CD8-positive, alpha-beta T cell (primary cell): ENCODE measurements at regions of chr11 and their contacts with region 1.

Region 1: GRCh38 chr11:69670158-69670845 is 4.9 kb downstream of the LTO1 start:
- DNase-seq: peak; percentile 27 to 74 (median 61)
- ATAC-seq: peak; percentile 21
- H3K4me3 ChIP-seq: no peak overlapping the region
- H3K4me3 Mint-ChIP-seq: no peak overlapping the region
- H3K27ac ChIP-seq: no peak overlapping the region
- H3K27ac Mint-ChIP-seq: peak overlapping the region; percentile 62
- H3K4me1 ChIP-seq: peaks cover 23% of the 10 kb centered on the region
- H3K4me1 Mint-ChIP-seq: peaks cover 31% of the 10 kb centered on the region
- H3K27me3 ChIP-seq: no peaks in the 10 kb centered on the region
- H3K27me3 Mint-ChIP-seq: no peaks in the 10 kb centered on the region
- CTCF ChIP-seq: peak; percentile 74

Region 2: GRCh38 chr11:69048718-69049489 is 621.4 kb before region 1 on chr11 and contains the start of gene TPCN2:
- CTCF ChIA-PET with region 1: no interaction called
- POLR2A ChIA-PET with region 1: interaction called, 3 read pairs
- intact Hi-C with region 1: loop called in 1 of 2 experiments (anchors 2 kb)
- DNase-seq: peak; percentile 79 to 98 (median 89)
- ATAC-seq: peak; percentile 98
- H3K4me3 ChIP-seq: peak within 1 kb of the TSS; percentile 61 to 70
- H3K4me3 Mint-ChIP-seq: peak within 1 kb of the TSS; percentile 79
- H3K27ac ChIP-seq: peak within 1 kb of the TSS; percentile 74 to 91
- H3K27ac Mint-ChIP-seq: peak within 1 kb of the TSS; percentile 92
- H3K4me1 ChIP-seq: peaks cover 9% of the 10 kb centered on the region
- H3K4me1 Mint-ChIP-seq: peaks cover 28% of the 10 kb centered on the region
- H3K27me3 ChIP-seq: no peaks in the 10 kb centered on the region
- H3K27me3 Mint-ChIP-seq: no peaks in the 10 kb centered on the region
- CTCF ChIP-seq: no peak
- total RNA-seq, gene TPCN2: 13.1 to 15.0 TPM

Region 3: GRCh38 chr11:69101115-69101791 is 569.0 kb before region 1 on chr11:
- CTCF ChIA-PET with region 1: interaction called, 13 read pairs
- POLR2A ChIA-PET with region 1: no interaction called
- intact Hi-C with region 1: loop called (anchors 1 kb)
- DNase-seq: peak; percentile 57 to 85 (median 70)
- ATAC-seq: peak; percentile 99
- H3K4me3 ChIP-seq: no peak overlapping the region
- H3K4me3 Mint-ChIP-seq: no peak overlapping the region
- H3K27ac ChIP-seq: no peak overlapping the region
- H3K27ac Mint-ChIP-seq: no peak overlapping the region
- H3K4me1 ChIP-seq: no peaks in the 10 kb centered on the region
- H3K4me1 Mint-ChIP-seq: peaks cover 4% of the 10 kb centered on the region
- H3K27me3 ChIP-seq: peaks cover 0 to 6% of the 10 kb centered on the region in 2 experiments
- H3K27me3 Mint-ChIP-seq: peaks cover 3% of the 10 kb centered on the region
- CTCF ChIP-seq: peak; percentile 95

Region 4: DNA sequence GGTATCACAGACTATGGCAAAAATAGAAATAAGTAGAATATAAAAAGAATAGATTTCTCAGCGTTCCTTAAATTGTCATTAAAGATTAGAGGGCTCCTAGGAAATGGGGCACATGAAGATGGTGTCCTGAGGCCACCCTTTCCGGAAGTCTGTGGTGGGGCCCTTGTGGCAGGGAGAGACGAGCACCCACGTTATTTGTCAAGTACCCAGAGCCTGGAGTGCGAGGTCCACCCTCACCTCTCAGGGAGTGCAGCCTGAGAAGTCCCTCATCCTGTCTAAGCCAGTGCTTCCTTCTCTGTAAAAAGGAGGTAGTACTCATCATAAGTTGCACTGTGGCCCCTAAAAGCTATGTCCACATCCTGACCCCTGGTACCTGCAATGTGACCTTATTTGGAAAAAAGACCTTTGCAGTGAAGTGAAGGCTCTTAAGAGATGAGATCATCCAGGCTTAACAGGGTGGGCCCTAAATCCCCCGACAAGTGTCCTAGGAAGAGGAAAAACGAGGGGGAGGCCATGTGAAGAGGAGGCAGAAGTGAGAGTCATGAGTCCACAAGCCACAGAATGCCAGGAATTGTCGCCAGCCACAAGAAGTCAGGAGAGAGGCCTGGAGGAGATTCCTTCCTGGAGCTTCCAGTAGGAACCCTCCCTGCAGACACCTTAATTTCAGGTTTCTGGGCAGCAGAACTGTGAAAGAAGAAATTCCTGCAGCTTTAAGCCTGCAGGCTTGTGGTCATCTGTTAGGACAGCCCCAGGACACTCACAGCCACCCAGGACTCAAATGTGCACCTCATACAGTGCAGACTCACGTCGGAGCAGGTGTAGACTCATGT is 106.1 kb before region 1 on chr11:
- CTCF ChIA-PET with region 1: no interaction called
- POLR2A ChIA-PET with region 1: no interaction called
- intact Hi-C with region 1: no loop called
- DNase-seq: no peak
- ATAC-seq: no peak
- H3K4me3 ChIP-seq: no peak overlapping the region
- H3K4me3 Mint-ChIP-seq: no peak overlapping the region
- H3K27ac ChIP-seq: no peak overlapping the region
- H3K27ac Mint-ChIP-seq: no peak overlapping the region
- H3K4me1 ChIP-seq: peaks cover 4% of the 10 kb centered on the region
- H3K4me1 Mint-ChIP-seq: peaks cover 5% of the 10 kb centered on the region
- H3K27me3 ChIP-seq: no peaks in the 10 kb centered on the region
- H3K27me3 Mint-ChIP-seq: peaks cover 18% of the 10 kb centered on the region
- CTCF ChIP-seq: no peak

Region 5: GRCh38 chr11:69654569-69655327 is 15.6 kb before region 1 on chr11:
- CTCF ChIA-PET with region 1: interaction called, 28 read pairs
- POLR2A ChIA-PET with region 1: no interaction called
- intact Hi-C with region 1: no loop called
- DNase-seq: no peak
- ATAC-seq: no peak
- H3K4me3 ChIP-seq: no peak overlapping the region
- H3K4me3 Mint-ChIP-seq: no peak overlapping the region
- H3K27ac ChIP-seq: no peak overlapping the region
- H3K27ac Mint-ChIP-seq: no peak overlapping the region
- H3K4me1 ChIP-seq: no peaks in the 10 kb centered on the region
- H3K4me1 Mint-ChIP-seq: no peaks in the 10 kb centered on the region
- H3K27me3 ChIP-seq: no peaks in the 10 kb centered on the region
- H3K27me3 Mint-ChIP-seq: no peaks in the 10 kb centered on the region
- CTCF ChIP-seq: no peak

Region 6: DNA sequence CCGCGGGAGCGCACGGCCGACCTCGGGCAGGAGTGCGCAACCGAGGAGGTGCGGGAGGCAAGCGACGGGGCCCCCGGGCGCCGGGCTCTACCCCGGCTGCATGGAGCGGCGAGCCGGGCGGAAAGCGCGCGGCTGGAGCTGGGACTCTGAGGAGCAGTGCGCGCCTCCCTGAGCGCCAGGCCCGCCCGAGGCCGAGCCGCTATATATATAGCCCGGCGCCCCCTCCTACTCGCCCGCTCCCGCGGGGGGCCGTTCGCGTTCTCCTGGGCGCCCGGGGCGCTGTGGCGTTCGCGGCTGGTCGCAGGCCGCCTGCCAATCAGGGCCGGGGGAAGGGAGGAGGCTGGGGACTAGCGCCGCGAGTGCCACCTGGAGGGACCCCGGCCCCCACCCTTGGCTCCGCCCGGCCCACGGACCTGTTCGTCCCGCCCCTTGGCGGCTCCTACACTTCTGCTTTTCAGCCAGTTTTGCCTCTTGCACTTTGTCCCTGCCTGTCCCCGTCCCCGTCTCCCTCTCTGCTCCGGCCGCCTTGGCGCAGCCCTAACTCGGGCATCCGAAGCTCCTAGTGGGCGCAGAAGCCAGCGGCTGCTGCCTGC is 105.0 kb after region 1 on chr11 and contains the start of gene FGF4:
- CTCF ChIA-PET with region 1: no interaction called
- POLR2A ChIA-PET with region 1: no interaction called
- intact Hi-C with region 1: no loop called
- DNase-seq: no peak
- ATAC-seq: no peak
- H3K4me3 ChIP-seq: no peak within 1 kb of the TSS
- H3K4me3 Mint-ChIP-seq: no peak within 1 kb of the TSS
- H3K27ac ChIP-seq: no peak within 1 kb of the TSS
- H3K27ac Mint-ChIP-seq: no peak within 1 kb of the TSS
- H3K4me1 ChIP-seq: no peaks in the 10 kb centered on the region
- H3K4me1 Mint-ChIP-seq: no peaks in the 10 kb centered on the region
- H3K27me3 ChIP-seq: no peaks in the 10 kb centered on the region
- H3K27me3 Mint-ChIP-seq: peaks cover 39% of the 10 kb centered on the region
- CTCF ChIP-seq: no peak
- total RNA-seq, gene FGF4: not detected